Heart left ventricle (tissue), 16 donors: ENCODE measurements at regions of chr12 and their contacts with region 1.

Region 1: DNA sequence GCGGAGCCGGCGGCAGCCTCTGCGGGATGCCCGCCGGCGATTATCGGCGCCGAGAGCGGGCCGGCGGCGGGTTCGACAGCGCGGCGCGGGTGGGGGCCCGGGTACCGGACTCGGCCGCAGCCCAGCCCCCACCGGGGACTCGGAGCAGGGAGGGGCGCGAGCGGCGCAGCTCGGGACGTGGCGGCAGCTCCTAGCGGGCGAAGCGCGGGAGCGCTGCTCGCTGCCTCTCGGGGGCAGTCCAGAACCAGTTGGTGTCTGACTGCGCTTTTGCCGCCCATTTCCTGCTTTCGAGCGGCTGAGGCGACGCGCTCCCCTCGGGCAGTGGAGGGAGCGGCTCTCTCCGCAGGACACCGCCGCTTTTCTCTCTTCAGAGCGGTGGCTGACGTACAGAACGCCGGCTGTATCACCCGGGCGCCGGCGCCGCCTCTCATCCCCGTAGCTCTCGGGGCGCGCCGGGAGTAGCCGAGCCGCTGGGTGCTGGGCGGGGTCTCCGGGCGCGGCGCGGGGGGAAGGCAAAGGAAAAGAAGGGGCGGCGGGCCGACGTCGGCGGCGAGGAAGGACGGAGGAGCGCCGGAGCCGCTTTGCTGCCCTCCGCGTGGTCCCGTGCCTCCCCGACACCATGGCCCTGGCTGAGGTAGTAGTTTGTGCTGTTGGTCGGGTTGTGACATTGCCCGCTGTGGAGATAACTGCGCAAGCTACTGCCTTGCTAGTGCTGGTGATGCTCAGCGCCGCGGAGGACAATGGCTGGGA is 136.6 kb downstream of the MON2 start:
- DNase-seq: peak; percentile 89 to 94 (median 90)
- ATAC-seq: peak; percentile 84 to 95 (median 92)
- H3K4me3 ChIP-seq: peak overlapping the region; percentile 69 to 100 (median 88)
- H3K27ac ChIP-seq: peak overlapping the region; percentile 98 to 100 (median 100)
- H3K4me1 ChIP-seq: peaks cover 2 to 42% (median 20%) of the 10 kb centered on the region in 12 donors
- H3K27me3 ChIP-seq: no peaks in the 10 kb centered on the region
- CTCF ChIP-seq: peak; percentile 27 to 78 (median 54)
- POLR2A ChIP-seq: peak in 1 of 2 donors; percentile 50

Region 2: DNA sequence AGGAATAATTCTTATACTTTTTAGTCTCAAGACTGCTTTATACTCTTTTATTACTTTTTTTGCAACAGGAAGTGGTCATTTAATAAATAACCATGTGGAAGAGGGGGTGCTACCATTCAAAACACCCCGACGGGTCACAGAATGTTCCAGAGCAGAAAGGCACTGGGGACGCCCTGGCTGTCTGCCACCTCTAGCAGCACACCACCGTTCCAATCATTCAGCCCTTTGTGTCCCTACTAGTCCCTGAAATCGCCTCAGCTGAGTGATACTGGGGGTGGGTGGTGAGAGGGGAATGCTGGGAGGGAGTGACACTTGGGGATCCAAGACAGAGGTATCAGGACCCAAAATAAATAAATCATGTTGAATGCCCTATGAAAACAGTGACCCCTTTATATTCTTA is 84.2 kb before region 1 on chr12:
- intact Hi-C with region 1: no loop called
- DNase-seq: peak in 3 of 5 donors; percentile 12 to 35 (median 20)
- ATAC-seq: peak; percentile 66 to 79 (median 74)
- H3K4me3 ChIP-seq: no peak overlapping the region
- H3K27ac ChIP-seq: peak overlapping the region in 1 of 12 donors; percentile 42
- H3K4me1 ChIP-seq: peaks cover 0 to 18% (median 2%) of the 10 kb centered on the region in 12 donors
- H3K27me3 ChIP-seq: no peaks in the 10 kb centered on the region
- CTCF ChIP-seq: no peak
- POLR2A ChIP-seq: no peak

Region 3: DNA sequence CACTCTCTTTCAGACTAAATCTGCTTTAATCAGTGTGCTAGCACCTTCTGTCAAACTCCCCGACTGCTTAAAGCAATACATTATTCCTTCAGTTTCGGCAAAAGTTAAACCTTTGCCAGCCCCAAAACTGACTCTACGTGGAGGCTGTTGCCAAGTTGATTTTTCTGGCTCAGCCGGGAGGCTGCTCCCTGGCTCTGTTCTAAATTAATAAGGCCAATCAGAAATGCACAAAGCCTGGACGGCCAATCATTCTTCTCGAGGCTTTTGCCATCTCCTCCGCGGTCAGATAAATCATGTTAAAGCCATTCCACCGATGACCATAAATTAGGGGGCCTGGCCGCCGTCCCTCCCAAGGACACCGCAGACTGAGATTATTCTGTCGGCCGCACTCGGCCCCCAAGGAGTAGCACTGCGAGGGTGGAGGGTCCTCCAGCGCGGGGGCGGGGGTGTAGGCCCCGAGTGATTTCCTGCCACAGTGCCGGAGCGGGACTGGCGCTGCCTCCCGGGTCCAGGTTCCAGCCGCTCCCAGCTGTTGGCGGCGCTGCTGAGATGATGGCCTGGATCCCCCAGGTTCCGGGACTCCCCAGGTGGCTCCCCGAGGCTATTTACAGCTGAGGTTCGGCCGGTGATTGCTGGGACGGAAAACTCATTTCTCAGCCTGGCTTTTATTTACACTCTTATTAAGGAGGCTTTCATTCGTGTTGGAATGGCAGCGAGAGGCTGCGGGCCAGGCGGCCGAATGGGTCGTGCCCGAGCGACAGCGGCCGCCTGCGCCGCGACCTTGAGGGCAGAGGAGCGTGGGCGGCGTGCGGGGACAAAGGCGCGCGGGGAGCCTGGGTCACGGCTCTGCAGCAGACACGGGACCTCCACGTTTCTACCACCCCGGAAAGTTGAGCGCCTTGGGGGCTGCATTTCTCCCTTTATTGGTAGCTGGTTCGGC is 28.5 kb after region 1 on chr12:
- intact Hi-C with region 1: loop called in 2 of 10 experiments (anchors 1 kb)
- DNase-seq: peak; percentile 67 to 81 (median 76)
- ATAC-seq: peak; percentile 75 to 93 (median 88)
- H3K4me3 ChIP-seq: peak overlapping the region; percentile 48 to 73 (median 62)
- H3K27ac ChIP-seq: peak overlapping the region in 11 of 12 donors; percentile 47 to 80 (median 72)
- H3K4me1 ChIP-seq: peaks cover 0 to 23% (median 7%) of the 10 kb centered on the region in 12 donors
- H3K27me3 ChIP-seq: peaks cover 0 to 22% (median 0%) of the 10 kb centered on the region in 9 donors
- CTCF ChIP-seq: peak in 9 of 12 donors; percentile 20 to 60 (median 42)
- POLR2A ChIP-seq: peak in 1 of 2 donors; percentile 40

Region 4: GRCh38 chr12:62684570-62685295 is 81.5 kb after region 1 on chr12:
- intact Hi-C with region 1: loop called in 1 of 10 experiments (anchors 5 kb)
- DNase-seq: peak; percentile 68 to 82 (median 71)
- ATAC-seq: peak; percentile 52 to 84 (median 72)
- H3K4me3 ChIP-seq: peak overlapping the region in 1 of 12 donors; percentile 6
- H3K27ac ChIP-seq: peak overlapping the region; percentile 41 to 95 (median 68)
- H3K4me1 ChIP-seq: peaks cover 0 to 24% (median 0%) of the 10 kb centered on the region in 12 donors
- H3K27me3 ChIP-seq: no peaks in the 10 kb centered on the region
- CTCF ChIP-seq: no peak
- POLR2A ChIP-seq: no peak

Region 5: DNA sequence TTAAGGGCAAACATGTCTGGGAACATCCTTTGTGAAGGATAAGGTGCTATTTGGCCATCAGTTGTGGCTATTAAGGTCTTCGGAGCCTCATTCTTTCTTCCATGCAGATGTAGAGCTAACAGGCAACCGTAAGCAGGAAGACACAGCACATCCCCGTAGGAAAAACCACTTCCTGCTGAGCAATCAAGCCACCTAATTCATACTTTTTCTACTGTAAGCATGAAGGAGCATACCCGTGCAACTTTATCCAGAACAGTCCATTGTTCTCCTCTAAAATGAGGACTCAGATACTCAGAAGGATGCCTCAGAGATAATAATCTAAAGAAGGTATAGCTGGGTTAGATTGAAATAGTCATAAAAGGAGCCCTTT is 99.8 kb after region 1 on chr12:
- intact Hi-C with region 1: loop called in 2 of 10 experiments (anchors 1 to 5 kb)
- DNase-seq: no peak
- ATAC-seq: peak in 2 of 4 donors; percentile 13 to 55
- H3K4me3 ChIP-seq: no peak overlapping the region
- H3K27ac ChIP-seq: peak overlapping the region in 11 of 12 donors; percentile 39 to 87 (median 66)
- H3K4me1 ChIP-seq: peaks cover 5 to 48% (median 27%) of the 10 kb centered on the region in 12 donors
- H3K27me3 ChIP-seq: no peaks in the 10 kb centered on the region
- CTCF ChIP-seq: no peak
- POLR2A ChIP-seq: no peak